SK-N-SH (cell line): ENCODE measurements at regions of chr1 and their contacts with region 1.

Region 1: DNA sequence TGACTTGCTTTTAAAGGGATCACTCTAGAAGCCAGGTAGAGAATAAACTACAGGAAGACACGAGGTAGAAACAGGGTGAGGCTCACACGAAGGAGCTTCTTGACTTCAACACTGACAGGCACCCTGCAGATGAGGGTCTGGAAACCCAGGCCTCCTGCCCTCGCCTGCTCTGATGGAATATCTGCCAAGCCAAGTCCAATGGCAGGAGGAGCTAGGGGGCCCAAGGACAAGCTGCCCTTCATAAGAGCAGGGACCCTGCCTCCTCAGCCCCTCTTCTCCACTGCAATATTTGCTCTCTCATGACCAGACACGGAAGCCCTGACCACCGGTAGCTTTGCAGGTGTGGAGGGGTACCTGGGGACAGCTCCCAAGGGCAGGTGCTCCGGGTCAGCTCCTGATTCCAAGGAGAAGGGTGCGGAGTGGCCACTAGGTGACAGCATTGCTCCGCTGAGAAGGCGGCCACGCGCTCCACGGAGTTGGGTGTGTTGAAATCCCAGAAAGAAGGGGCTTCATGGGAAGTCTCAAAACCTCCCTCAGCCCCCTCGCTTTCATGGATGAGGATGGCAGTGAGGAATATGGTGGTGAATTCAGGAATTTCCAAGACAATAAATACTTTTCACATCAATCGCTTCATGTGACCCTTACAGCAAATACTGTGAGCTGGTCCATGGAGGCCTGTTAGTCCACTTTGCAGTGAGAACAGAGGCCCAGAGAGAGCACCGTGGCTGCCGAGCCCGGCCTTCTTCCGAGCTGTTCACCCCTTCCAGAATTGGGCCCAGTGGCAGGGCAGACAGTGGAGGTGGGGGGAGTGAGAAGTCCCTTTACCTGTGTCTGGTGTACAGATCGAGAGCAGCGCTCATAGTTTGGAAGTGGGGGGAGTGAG is 33.2 kb upstream of the PAX7 start:
- DNase-seq: peak; percentile 77
- H3K4me3 ChIP-seq: no peak overlapping the region; a peak in 1 of 4 replicates
- H3K27ac ChIP-seq: no peak overlapping the region
- H3K4me1 ChIP-seq: peaks cover 0 to 10% of the 10 kb centered on the region in 2 experiments; a peak in 1 of 4 replicates
- H3K27me3 ChIP-seq: peaks cover 4% of the 10 kb centered on the region; the same call in 1 of the 2 replicates
- CTCF ChIP-seq: peak; percentile 93
- EP300 ChIP-seq: no peak
- RAD21 ChIP-seq: peak; percentile 94

Region 2: GRCh38 chr1:18581420-18581880 is 16.0 kb before region 1 on chr1:
- CTCF ChIA-PET with region 1: interaction called, 144 read pairs
- POLR2A ChIA-PET with region 1: interaction called, 3 read pairs
- DNase-seq: peak; percentile 85
- H3K4me3 ChIP-seq: no peak overlapping the region; a peak in 1 of 4 replicates
- H3K27ac ChIP-seq: no peak overlapping the region
- H3K4me1 ChIP-seq: no peaks in the 10 kb centered on the region; a peak in 1 of 4 replicates
- H3K27me3 ChIP-seq: no peaks in the 10 kb centered on the region
- CTCF ChIP-seq: peak; percentile 65
- EP300 ChIP-seq: no peak
- RAD21 ChIP-seq: peak; percentile 84

Region 3: GRCh38 chr1:18643154-18644012 is 46.0 kb after region 1 on chr1:
- CTCF ChIA-PET with region 1: interaction called, 21 read pairs
- POLR2A ChIA-PET with region 1: no interaction called
- DNase-seq: peak; percentile 73
- H3K4me3 ChIP-seq: no peak overlapping the region
- H3K27ac ChIP-seq: no peak overlapping the region
- H3K4me1 ChIP-seq: no peaks in the 10 kb centered on the region
- H3K27me3 ChIP-seq: peaks cover 97% of the 10 kb centered on the region
- CTCF ChIP-seq: no peak
- EP300 ChIP-seq: no peak
- RAD21 ChIP-seq: no peak

Region 4: DNA sequence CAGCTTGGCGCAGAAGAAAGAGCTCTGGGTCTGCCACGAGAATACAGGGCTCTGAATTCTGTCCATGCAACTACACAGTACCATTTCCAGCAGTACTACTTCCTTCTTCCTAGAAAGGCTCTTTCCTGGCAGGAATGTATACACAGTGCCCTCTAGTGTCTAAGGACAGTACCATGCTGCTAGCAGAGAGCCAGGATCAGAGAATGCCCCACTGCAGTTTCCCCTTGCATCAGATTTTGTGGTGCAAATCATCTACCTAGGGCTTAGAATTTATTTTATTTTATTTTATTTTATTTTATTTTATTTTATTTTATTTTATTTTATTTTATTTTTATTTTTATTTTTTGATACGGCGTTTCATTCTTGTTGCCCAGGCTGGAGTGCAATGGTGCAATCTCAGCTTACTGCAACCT is 84.0 kb after region 1 on chr1:
- CTCF ChIA-PET with region 1: interaction called, 29 read pairs
- POLR2A ChIA-PET with region 1: no interaction called
- DNase-seq: peak; percentile 78
- H3K4me3 ChIP-seq: no peak overlapping the region
- H3K27ac ChIP-seq: no peak overlapping the region
- H3K4me1 ChIP-seq: no peaks in the 10 kb centered on the region
- H3K27me3 ChIP-seq: no peaks in the 10 kb centered on the region
- CTCF ChIP-seq: peak; percentile 60
- EP300 ChIP-seq: no peak
- RAD21 ChIP-seq: peak; percentile 67

Region 5: DNA sequence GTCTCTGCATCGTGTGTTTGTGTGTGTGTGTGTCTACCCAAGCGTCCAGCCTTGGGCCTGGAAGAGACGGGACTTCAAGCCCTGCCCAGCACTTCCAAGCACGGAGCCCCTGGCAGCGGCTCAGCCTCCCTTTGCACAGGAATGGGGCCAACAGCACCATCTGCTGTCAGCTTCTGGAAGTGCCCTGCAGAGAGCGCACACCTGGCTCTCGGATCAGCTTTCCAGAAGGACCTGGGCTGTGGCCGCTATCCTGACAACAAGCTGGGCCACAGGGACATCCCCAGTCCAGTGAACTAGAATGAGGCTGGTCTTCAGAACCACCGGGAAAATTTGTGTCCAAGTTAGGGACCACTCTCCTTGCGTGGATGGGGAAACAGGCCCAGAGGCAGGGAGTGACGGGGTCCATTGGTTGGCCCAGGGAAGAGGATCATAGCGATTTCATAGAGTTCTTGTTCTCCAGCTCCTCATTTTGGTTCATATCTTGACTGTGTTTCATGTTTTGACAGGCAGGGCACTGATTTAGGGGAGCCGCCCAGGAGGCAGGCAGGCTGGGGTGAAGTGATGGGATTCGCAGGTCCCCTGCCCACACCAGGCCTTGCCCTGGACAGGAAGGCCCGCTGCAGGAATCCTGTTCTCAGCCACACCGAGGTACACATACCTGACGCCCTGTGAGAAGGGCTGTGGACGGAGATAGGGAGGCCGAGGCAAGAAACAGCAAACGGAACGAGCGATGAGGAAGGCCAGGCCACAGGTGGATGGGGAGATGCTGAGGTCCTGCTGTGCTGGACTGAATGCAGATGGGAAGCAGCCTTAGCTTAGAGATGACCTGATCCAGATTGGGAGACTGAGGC is 223.6 kb after region 1 on chr1:
- CTCF ChIA-PET with region 1: interaction called, 279 read pairs
- POLR2A ChIA-PET with region 1: interaction called, 3 read pairs
- DNase-seq: peak; percentile 89
- H3K4me3 ChIP-seq: peak overlapping the region in 1 of 2 experiments; percentile 24; a peak in 1 of 4 replicates
- H3K27ac ChIP-seq: no peak overlapping the region
- H3K4me1 ChIP-seq: peaks cover 0 to 6% of the 10 kb centered on the region in 2 experiments; a peak in 1 of 4 replicates
- H3K27me3 ChIP-seq: no peaks in the 10 kb centered on the region
- CTCF ChIP-seq: peak; percentile 82
- EP300 ChIP-seq: no peak
- RAD21 ChIP-seq: peak; percentile 90

Region 6: GRCh38 chr1:18875107-18875795 is 277.9 kb after region 1 on chr1:
- CTCF ChIA-PET with region 1: interaction called, 350 read pairs
- POLR2A ChIA-PET with region 1: no interaction called
- DNase-seq: peak; percentile 96
- H3K4me3 ChIP-seq: no peak overlapping the region; a peak in 1 of 4 replicates
- H3K27ac ChIP-seq: no peak overlapping the region
- H3K4me1 ChIP-seq: peaks cover 0 to 8% of the 10 kb centered on the region in 2 experiments; a peak in 1 of 4 replicates
- H3K27me3 ChIP-seq: no peaks in the 10 kb centered on the region
- CTCF ChIP-seq: peak; percentile 80
- EP300 ChIP-seq: no peak
- RAD21 ChIP-seq: peak; percentile 93

Region 7: GRCh38 chr1:18926315-18927081 is 329.1 kb after region 1 on chr1:
- CTCF ChIA-PET with region 1: interaction called, 10 read pairs
- POLR2A ChIA-PET with region 1: no interaction called
- DNase-seq: no peak
- H3K4me3 ChIP-seq: 0 out of 4 replicates have a peak overlapping the region, but pooled peaks of 1 of the 2 experiments have one; percentile 22
- H3K27ac ChIP-seq: peak overlapping the region in 1 of 2 experiments; percentile 94; a peak in 2 of 4 replicates
- H3K4me1 ChIP-seq: peaks cover 46 to 50% of the 10 kb centered on the region in 2 experiments; a peak in 3 of 4 replicates
- H3K27me3 ChIP-seq: no peaks in the 10 kb centered on the region
- CTCF ChIP-seq: no peak
- EP300 ChIP-seq: peak in 1 of 2 experiments; percentile 75; a peak in 1 of 4 replicates
- RAD21 ChIP-seq: no peak

Region 8: DNA sequence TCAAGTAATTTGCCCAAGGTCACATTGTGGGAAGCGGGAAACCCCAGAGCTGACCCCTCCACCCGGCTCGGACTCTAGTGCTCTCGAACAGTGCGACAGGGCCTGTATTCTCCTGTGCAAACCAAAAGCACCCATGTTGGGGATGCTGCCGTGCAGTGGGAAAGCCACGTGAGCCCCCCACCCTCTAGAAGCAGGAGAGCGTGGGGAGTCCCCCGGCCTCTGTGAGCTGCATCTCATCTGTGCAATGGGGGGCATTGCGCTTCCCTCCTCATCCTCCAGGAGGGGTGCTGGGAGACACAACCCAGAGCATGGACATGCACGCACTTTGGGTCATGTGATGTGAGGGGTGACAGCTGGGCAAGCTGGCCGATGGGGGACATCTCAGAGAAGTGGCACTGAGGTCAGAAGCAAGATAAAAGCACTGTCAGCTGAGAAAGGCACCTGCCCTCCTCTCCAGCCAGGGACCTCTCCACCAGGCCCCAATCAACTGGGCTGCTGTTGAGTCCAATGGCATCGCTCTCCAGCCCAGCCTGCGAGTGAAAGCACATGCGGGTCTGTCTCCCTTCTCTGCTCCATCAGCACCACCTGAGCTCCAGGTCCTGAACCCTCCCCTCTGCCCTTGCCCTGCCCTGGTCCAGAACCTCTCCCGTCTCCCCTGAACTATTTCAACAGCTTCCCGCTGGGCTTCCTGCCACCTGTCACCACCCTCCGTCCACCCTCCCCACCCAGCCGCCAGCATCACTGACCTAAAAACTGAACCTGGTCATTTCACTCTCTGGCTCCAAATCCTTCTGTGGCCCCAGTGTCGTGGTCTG is 435.5 kb after region 1 on chr1:
- CTCF ChIA-PET with region 1: no interaction called
- POLR2A ChIA-PET with region 1: no interaction called
- DNase-seq: no peak
- H3K4me3 ChIP-seq: no peak overlapping the region
- H3K27ac ChIP-seq: no peak overlapping the region
- H3K4me1 ChIP-seq: peaks cover 11% of the 10 kb centered on the region in 2 experiments; a peak in 3 of 4 replicates
- H3K27me3 ChIP-seq: no peaks in the 10 kb centered on the region
- CTCF ChIP-seq: no peak; the same call in 1 of the 2 replicates
- EP300 ChIP-seq: no peak
- RAD21 ChIP-seq: no peak